Breast epithelium (tissue), 4 donors: ENCODE measurements at regions of chr9 and their contacts with region 1.

Region 1: GRCh38 chr9:126235336-126236243 is 91.0 kb upstream of the MVB12B start:
- DNase-seq: no peak
- H3K4me3 ChIP-seq: no peak overlapping the region
- H3K27ac ChIP-seq: no peak overlapping the region
- H3K4me1 ChIP-seq: no peaks in the 10 kb centered on the region
- H3K27me3 ChIP-seq: no peaks in the 10 kb centered on the region
- CTCF ChIP-seq: no peak
- POLR2A ChIP-seq: no peak

Region 2: GRCh38 chr9:125843646-125844045 is 391.9 kb before region 1 on chr9:
- intact Hi-C with region 1: loop called (anchors 5 kb)
- DNase-seq: no peak
- H3K4me3 ChIP-seq: no peak overlapping the region
- H3K27ac ChIP-seq: no peak overlapping the region
- H3K4me1 ChIP-seq: no peaks in the 10 kb centered on the region
- H3K27me3 ChIP-seq: no peaks in the 10 kb centered on the region
- CTCF ChIP-seq: no peak
- POLR2A ChIP-seq: no peak

Region 3: DNA sequence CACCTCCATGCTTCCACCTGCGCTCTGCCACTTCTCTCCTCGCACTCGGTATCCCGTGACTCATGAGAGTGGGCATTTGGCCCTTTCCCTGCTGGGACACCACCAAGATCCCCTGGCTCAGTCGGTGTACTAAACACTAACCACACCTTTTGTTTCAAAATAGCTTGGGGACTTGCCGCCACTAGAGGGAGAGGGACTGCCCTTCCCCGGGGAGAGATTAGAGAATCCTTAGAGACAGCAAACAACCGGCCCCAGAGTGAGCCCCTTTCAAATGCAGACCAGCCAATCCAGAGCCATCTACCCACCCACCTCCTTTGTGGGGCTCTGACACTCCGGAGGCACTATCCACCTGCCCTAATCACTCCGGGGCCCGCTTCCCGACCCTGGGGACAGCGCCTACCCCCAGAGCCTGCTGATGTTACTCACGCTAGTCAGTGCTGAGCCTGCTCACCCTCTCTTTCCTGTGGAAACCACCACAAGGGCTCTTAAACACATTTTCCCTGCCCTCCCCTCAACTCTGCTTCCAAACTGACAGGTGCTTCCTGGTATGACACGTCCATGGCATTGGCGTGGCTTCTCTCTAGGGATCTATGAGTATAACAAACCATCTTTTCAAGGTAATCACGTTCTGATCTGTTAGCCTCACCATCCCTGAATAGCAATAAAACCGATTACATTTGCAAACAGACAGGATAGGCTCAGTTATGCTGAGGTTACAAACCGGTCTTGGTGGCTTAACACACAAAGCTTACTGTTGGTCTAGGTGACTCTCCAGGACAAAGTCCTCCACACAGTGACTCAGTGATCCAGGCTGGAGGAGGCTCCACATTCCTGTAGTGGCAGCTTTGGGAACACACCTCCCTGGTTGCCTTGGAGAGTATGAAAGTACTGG is 89.1 kb before region 1 on chr9:
- intact Hi-C with region 1: no loop called
- DNase-seq: peak in 1 of 2 donors; percentile 15
- H3K4me3 ChIP-seq: no peak overlapping the region
- H3K27ac ChIP-seq: no peak overlapping the region
- H3K4me1 ChIP-seq: no peaks in the 10 kb centered on the region
- H3K27me3 ChIP-seq: peaks cover 0 to 25% of the 10 kb centered on the region in 2 donors
- CTCF ChIP-seq: no peak
- POLR2A ChIP-seq: no peak

Region 4: DNA sequence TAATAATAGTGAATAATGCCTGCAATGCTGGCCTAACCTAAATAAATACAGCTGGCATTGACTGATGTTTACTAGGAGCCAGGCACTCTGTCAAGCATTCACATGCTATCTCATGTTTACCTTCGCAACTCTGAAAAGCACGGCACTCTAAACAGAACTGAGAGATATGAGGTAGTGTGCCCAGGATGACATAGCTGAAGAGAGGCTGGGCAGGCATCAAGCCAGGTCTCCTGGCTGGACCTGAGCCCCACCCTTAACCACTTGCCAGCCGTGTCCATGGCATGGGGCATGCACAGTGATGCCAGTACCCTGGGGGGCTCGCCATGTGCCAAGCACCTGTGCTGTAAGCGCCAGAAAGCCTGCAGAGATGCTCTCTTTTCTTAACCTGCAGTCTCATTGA is 28.3 kb before region 1 on chr9:
- intact Hi-C with region 1: no loop called
- DNase-seq: no peak
- H3K4me3 ChIP-seq: no peak overlapping the region
- H3K27ac ChIP-seq: no peak overlapping the region
- H3K4me1 ChIP-seq: no peaks in the 10 kb centered on the region
- H3K27me3 ChIP-seq: no peaks in the 10 kb centered on the region
- CTCF ChIP-seq: no peak
- POLR2A ChIP-seq: no peak

Region 5: DNA sequence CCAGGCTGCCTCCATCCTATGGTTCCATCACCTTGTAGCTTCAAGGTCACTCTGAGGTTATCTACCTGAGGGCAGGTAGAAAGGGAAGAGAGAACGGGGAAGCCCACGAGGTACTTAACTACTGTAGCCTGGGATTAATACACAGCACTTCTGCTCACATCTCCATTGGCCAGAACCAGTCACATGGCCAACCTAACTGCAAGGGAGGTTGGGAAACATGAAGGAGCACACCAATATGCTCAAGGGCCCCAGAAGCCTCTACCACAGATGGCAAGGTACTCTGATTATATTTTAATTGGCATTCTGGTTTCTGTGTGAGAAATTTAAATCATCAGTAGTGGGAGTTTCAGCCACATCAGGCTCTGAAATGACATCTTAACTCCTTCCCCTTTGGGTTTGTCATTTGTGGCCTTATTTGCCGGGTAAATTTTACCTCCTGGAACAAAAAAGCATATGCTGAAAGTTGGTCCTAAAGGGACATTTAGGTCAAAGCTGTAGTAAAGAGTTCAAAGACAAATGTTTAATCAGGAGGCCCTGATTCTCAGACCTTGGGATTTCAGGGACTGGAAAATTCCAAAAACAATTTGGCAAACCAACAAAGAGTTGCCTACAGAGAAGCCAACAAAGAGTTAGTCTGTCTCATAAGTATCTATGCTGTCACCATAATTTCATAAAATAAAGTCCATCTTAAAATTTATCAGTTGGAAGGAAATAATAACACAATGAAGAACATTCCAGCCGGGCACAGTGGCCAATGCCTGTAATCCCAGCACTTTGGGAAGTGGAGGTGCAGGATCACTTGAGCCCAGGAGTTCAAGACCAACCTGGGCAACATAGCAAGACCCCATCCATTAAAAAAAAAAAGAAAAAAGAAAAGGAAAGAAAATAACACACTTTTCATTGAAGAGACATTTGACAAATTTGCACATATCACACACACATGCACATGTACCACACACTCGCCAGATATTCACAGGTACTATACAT is 77.3 kb after region 1 on chr9:
- intact Hi-C with region 1: loop called (anchors 2 kb)
- DNase-seq: no peak
- H3K4me3 ChIP-seq: no peak overlapping the region
- H3K27ac ChIP-seq: no peak overlapping the region
- H3K4me1 ChIP-seq: no peaks in the 10 kb centered on the region
- H3K27me3 ChIP-seq: no peaks in the 10 kb centered on the region
- CTCF ChIP-seq: no peak
- POLR2A ChIP-seq: no peak

Region 6: GRCh38 chr9:126829035-126829434 is 593.4 kb after region 1 on chr9:
- intact Hi-C with region 1: loop called (anchors 5 kb)
- DNase-seq: no peak
- H3K4me3 ChIP-seq: no peak overlapping the region
- H3K27ac ChIP-seq: no peak overlapping the region
- H3K4me1 ChIP-seq: no peaks in the 10 kb centered on the region
- H3K27me3 ChIP-seq: no peaks in the 10 kb centered on the region
- CTCF ChIP-seq: no peak
- POLR2A ChIP-seq: no peak